ENCODE measurements at regions of chr16 and their contacts with region 1.

Region 1: GRCh38 chr16:3123986-3124886 is 10.6 kb upstream of the ZNF213 start:
- DNase-seq: peak; percentile 96 to 97 (median 96)
- H3K4me3 ChIP-seq: peak overlapping the region; percentile 85 to 97
- H3K4me3 Mint-ChIP-seq: peak overlapping the region; percentile 94 to 98 (median 96)
- H3K27ac ChIP-seq: peak overlapping the region; percentile 50
- H3K27ac Mint-ChIP-seq: peak overlapping the region; percentile 95 to 99 (median 97)
- H3K4me1 ChIP-seq: peaks cover 40% of the 10 kb centered on the region
- H3K4me1 Mint-ChIP-seq: peaks cover 18 to 52% (median 32%) of the 10 kb centered on the region in 4 donors
- H3K27me3 ChIP-seq: no peaks in the 10 kb centered on the region
- H3K27me3 Mint-ChIP-seq: no peaks in the 10 kb centered on the region

Region 2: DNA sequence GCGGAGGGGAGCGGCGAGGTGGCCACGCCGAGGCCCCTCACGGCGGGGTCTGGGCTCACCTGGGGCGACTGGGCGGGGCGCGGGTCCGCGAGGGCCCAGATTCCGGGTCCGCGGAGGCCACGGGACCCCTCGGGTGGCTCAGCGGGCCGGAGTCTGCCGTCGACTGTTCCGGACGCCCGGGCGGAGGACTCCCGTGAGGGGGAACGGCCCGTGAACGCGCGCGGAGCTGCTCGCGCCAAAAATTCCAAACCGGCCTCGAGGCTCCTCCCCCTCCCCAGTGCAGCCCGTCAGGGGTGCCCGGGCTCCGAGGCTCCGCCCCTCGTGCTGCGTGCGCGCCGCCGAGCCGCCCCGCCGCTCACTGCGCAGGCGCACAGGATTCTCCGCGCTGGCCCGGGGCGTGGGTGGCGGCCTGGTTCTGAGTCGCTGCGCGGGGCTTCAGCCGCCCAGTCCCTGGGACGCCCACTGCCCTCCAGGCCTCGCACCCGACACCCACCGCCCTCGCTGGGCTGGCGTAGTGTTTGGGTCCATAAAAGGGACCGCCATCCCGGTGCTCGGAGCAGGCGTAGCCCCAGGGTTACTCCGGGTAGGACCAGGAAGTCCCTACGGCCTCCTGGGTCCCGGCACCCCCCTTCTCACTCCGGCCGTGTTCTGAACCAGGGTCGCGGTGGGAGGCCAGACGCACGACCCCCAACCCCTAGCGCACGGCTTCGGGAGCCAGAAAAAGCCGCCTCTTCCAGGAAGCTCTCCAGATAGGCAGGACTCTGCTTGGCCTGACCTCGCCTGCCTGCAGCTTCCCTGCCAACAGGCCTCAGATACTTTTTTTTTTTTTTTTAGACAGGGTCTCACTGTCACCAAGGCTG is 143.8 kb before region 1 on chr16 and contains the start of gene PKMYT1:
- CTCF ChIA-PET with region 1: no interaction called
- POLR2A ChIA-PET with region 1: interaction called, 7 read pairs
- intact Hi-C with region 1: loop called (anchors 1 kb)
- DNase-seq: peak; percentile 87 to 97 (median 95)
- H3K4me3 ChIP-seq: peak within 1 kb of the TSS; percentile 57 to 73
- H3K4me3 Mint-ChIP-seq: peak within 1 kb of the TSS; percentile 77 to 85 (median 84)
- H3K27ac ChIP-seq: peak within 1 kb of the TSS; percentile 84
- H3K27ac Mint-ChIP-seq: peak within 1 kb of the TSS; percentile 55 to 89 (median 75)
- H3K4me1 ChIP-seq: peaks cover 16% of the 10 kb centered on the region
- H3K4me1 Mint-ChIP-seq: peaks cover 0 to 14% (median 6%) of the 10 kb centered on the region in 4 donors
- H3K27me3 ChIP-seq: no peaks in the 10 kb centered on the region
- H3K27me3 Mint-ChIP-seq: peaks cover 2% of the 10 kb centered on the region in 2 donors
- total RNA-seq, gene PKMYT1: 0.79 TPM in 1 of 2 experiments, not detected in the other

Region 3: GRCh38 chr16:3065069-3065741 is 59.0 kb before region 1 on chr16 and contains the start of gene IL32:
- CTCF ChIA-PET with region 1: interaction called, 362 read pairs
- POLR2A ChIA-PET with region 1: interaction called, 129 read pairs
- intact Hi-C with region 1: no loop called
- DNase-seq: peak; percentile 64 to 85 (median 66)
- H3K4me3 ChIP-seq: peak within 1 kb of the TSS; percentile 98
- H3K4me3 Mint-ChIP-seq: peak within 1 kb of the TSS; percentile 98 to 100 (median 100)
- H3K27ac ChIP-seq: peak within 1 kb of the TSS; percentile 98
- H3K27ac Mint-ChIP-seq: peak within 1 kb of the TSS; percentile 91 to 99 (median 96)
- H3K4me1 ChIP-seq: peaks cover 72% of the 10 kb centered on the region
- H3K4me1 Mint-ChIP-seq: peaks cover 34 to 84% (median 55%) of the 10 kb centered on the region in 4 donors
- H3K27me3 ChIP-seq: no peaks in the 10 kb centered on the region
- H3K27me3 Mint-ChIP-seq: no peaks in the 10 kb centered on the region
- total RNA-seq, gene IL32: 752 to 810 TPM

Region 4: DNA sequence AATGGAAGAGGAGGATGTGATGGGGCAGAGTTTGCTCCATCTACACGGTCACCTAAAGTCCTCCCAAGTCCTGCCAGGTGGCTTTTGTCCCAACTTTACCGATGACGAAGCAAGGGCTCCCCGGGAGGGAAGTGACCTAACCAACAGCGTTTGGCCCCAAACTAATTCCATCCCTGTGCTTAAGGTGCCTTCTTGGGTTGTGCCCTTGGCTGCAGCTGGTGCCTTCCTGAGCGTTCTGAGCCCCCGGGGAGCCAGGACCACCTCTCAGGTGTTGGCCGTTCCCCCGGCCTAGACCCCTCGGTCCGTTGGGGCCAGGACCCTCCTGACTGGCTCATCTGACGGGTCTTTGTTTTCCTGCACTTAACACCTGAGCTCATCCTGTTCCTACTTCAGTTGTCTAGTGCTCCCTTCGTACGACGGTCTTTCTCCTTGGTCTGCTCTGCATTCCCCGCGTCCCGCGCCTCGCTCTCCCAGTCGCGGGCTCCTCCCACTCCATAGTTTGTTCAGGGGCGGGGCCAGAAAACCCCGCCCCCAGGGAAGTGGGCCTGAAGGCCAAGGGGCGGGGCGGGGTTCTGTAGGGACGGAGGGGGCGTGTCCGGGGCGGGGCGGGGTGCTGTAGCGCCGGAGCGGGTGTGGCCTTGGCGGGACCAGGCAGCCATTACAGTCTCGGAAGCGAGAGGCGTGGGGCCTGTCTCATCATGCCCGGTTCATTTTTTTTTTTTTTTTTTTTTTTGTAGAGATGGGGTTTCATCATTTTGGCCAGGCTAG is 24.3 kb before region 1 on chr16:
- CTCF ChIA-PET with region 1: interaction called, 376 read pairs
- POLR2A ChIA-PET with region 1: interaction called, 146 read pairs
- intact Hi-C with region 1: loop called (anchors 1 kb)
- DNase-seq: peak; percentile 80 to 89 (median 82)
- H3K4me3 ChIP-seq: peak overlapping the region; percentile 19 to 23
- H3K4me3 Mint-ChIP-seq: peak overlapping the region; percentile 77 to 90 (median 86)
- H3K27ac ChIP-seq: peak overlapping the region; percentile 33
- H3K27ac Mint-ChIP-seq: peak overlapping the region; percentile 82 to 97 (median 93)
- H3K4me1 ChIP-seq: peaks cover 58% of the 10 kb centered on the region
- H3K4me1 Mint-ChIP-seq: peaks cover 19 to 68% (median 44%) of the 10 kb centered on the region in 4 donors
- H3K27me3 ChIP-seq: no peaks in the 10 kb centered on the region
- H3K27me3 Mint-ChIP-seq: no peaks in the 10 kb centered on the region

Region 5: DNA sequence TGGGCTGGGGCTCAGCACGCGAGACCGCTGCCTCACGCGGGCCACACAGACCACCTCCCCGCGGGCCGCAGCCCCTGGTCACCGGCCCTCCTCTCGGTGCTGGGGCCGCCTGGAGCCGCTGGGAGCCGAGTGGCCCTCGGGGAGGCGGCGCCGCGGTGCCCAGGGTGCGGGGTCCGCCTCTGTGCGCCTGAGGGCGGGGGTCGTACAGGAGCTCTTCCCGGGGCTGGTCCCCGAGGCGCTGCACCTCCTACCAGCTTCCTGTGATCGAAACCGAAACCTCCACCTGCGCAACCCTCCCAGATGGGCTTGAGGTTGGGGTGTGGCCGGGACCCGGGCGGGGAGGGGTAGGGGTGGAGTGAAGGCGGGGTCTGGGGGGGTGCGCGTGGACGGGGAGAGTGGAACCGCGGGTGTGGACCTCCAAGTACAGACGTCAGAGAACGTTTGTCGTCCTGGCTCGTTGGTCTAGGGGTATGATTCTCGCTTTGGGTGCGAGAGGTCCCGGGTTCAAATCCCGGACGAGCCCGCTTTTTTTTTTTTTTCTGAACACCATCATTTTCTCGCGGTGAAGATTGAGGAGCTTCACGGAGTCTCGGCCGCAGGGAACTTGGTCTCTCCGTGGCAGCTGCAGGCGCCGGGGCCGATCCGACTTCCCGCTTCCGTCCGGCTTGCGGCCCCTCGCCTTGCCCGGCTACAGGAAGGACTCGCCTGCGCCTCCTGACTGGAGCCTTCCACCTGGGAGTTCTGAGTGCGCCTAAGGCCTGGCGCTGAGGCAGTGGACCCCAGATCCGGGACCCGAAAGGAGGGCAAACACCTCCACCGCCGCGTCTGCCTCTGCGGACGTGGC is 34.5 kb after region 1 on chr16:
- CTCF ChIA-PET with region 1: interaction called, 18 read pairs
- POLR2A ChIA-PET with region 1: interaction called, 28 read pairs
- intact Hi-C with region 1: loop called (anchors 1 kb)
- DNase-seq: peak; percentile 92 to 98 (median 94)
- H3K4me3 ChIP-seq: peak overlapping the region; percentile 65 to 66
- H3K4me3 Mint-ChIP-seq: peak overlapping the region; percentile 83 to 96 (median 92)
- H3K27ac ChIP-seq: peak overlapping the region; percentile 62
- H3K27ac Mint-ChIP-seq: peak overlapping the region; percentile 92 to 100 (median 96)
- H3K4me1 ChIP-seq: peaks cover 25% of the 10 kb centered on the region
- H3K4me1 Mint-ChIP-seq: peaks cover 11 to 36% (median 25%) of the 10 kb centered on the region in 4 donors
- H3K27me3 ChIP-seq: no peaks in the 10 kb centered on the region
- H3K27me3 Mint-ChIP-seq: peaks cover 0 to 2% of the 10 kb centered on the region in 2 donors

Region 6: DNA sequence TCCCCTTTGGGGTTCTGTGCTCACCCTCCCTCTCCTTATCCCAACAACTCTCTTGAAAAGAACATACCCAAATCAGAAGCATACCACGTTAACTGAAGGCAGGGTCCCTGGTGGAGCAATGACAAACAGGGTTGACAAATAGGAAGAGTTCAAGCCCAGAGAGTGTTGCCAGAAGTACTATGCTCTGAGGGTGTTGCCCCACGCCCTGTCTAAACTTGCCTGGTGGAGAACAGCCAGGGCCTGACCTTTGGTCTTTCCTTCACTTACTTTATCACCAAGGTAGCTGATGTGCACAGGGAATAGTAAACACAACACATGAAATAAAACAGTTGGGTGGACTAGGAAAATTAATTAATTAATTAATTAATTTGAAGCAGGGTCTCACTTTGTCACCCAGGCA is 204.4 kb after region 1 on chr16:
- CTCF ChIA-PET with region 1: no interaction called
- POLR2A ChIA-PET with region 1: no interaction called
- intact Hi-C with region 1: no loop called
- DNase-seq: no peak
- H3K4me3 ChIP-seq: no peak overlapping the region
- H3K4me3 Mint-ChIP-seq: no peak overlapping the region
- H3K27ac ChIP-seq: no peak overlapping the region
- H3K27ac Mint-ChIP-seq: no peak overlapping the region
- H3K4me1 ChIP-seq: no peaks in the 10 kb centered on the region
- H3K4me1 Mint-ChIP-seq: no peaks in the 10 kb centered on the region
- H3K27me3 ChIP-seq: no peaks in the 10 kb centered on the region
- H3K27me3 Mint-ChIP-seq: no peaks in the 10 kb centered on the region

Region 7: GRCh38 chr16:3348547-3349167 is 224.4 kb after region 1 on chr16:
- CTCF ChIA-PET with region 1: no interaction called
- POLR2A ChIA-PET with region 1: no interaction called
- intact Hi-C with region 1: no loop called
- DNase-seq: no peak
- H3K4me3 ChIP-seq: no peak overlapping the region
- H3K4me3 Mint-ChIP-seq: no peak overlapping the region
- H3K27ac ChIP-seq: no peak overlapping the region
- H3K27ac Mint-ChIP-seq: no peak overlapping the region
- H3K4me1 ChIP-seq: no peaks in the 10 kb centered on the region
- H3K4me1 Mint-ChIP-seq: peaks cover 0 to 3% (median under 1%) of the 10 kb centered on the region in 4 donors
- H3K27me3 ChIP-seq: no peaks in the 10 kb centered on the region
- H3K27me3 Mint-ChIP-seq: peaks cover 2% of the 10 kb centered on the region in 2 donors